AG04449 (cell line): ENCODE measurements at regions of chr17 and their contacts with region 1.

Region 1: GRCh38 chr17:76384222-76384986 is at the start of gene SPHK1:
- DNase-seq: no peak
- H3K4me3 ChIP-seq: peak within 1 kb of the TSS; percentile 76
- CTCF ChIP-seq: no peak

Region 2: GRCh38 chr17:76314392-76315227 is 69.8 kb before region 1 on chr17:
- CTCF ChIA-PET with region 1: interaction called, 851 read pairs
- POLR2A ChIA-PET with region 1: no interaction called
- DNase-seq: no peak
- H3K4me3 ChIP-seq: no peak overlapping the region
- CTCF ChIP-seq: no peak

Region 3: GRCh38 chr17:76327696-76328095 is 56.7 kb before region 1 on chr17:
- CTCF ChIA-PET with region 1: interaction called, 17 read pairs
- POLR2A ChIA-PET with region 1: no interaction called
- DNase-seq: no peak
- H3K4me3 ChIP-seq: no peak overlapping the region
- CTCF ChIP-seq: no peak

Region 4: DNA sequence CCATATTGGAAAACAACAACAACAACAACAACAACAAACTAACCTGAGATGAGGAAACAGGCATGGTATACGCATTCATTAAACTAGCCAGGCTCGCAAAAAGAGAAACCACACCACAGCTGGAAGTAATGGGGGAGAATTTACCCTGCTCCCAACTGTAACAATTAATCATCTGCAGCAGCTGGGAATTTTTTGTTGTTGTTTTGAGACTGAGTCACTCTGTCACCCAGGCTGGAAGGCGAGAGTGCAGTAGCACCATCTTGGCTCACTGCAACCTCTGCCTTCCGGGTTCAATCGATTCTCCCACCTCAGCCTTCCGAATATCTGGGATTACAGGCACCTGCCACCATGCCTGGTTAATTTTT is 47.0 kb before region 1 on chr17:
- CTCF ChIA-PET with region 1: interaction called, 20 read pairs
- POLR2A ChIA-PET with region 1: no interaction called
- DNase-seq: no peak
- H3K4me3 ChIP-seq: no peak overlapping the region
- CTCF ChIP-seq: no peak

Region 5: DNA sequence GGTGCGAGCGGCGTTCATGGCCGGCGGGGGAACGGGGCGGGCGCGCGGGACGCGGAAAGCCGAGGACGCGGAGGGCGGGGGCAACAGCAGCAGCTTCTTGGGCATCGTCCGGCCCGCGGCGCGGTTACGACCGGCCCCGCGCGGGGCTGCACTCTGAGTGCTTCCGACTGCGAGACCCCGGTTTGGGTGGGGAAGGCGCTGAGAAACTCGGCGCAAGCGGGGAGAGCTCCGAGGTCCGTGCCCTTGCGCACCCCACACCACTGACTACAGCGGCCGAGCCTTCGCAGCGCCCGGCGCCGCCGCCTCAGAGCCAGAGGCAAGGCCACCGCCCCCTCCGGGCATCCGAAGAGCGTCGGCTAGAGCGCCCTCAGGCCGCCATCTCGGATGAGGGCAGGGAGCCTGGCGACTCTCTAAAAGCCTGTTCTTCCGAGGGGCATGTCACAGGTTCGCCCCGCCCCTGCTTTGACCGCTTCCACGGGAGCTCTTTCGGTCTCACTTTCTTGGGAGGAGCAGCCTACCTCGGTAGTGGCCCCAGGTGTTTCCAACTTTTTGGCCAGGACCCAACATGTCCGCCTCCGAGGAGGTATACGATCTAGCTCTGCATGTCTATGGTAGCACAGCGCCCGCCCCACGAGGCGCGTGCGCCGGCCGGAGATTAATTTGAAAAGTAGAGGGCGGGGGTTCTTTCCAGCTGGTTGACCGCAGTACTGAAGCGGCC is 30.6 kb before region 1 on chr17 and contains the start of gene PRPSAP1:
- CTCF ChIA-PET with region 1: interaction called, 74 read pairs
- POLR2A ChIA-PET with region 1: interaction called, 47 read pairs
- DNase-seq: no peak
- H3K4me3 ChIP-seq: peak within 1 kb of the TSS; percentile 90
- CTCF ChIP-seq: peak; percentile 64

Region 6: GRCh38 chr17:76370261-76370993 is 14.0 kb before region 1 on chr17:
- CTCF ChIA-PET with region 1: interaction called, 186 read pairs
- POLR2A ChIA-PET with region 1: interaction called, 37 read pairs
- DNase-seq: peak; percentile 67
- H3K4me3 ChIP-seq: no peak overlapping the region
- CTCF ChIP-seq: peak; percentile 68

Region 7: DNA sequence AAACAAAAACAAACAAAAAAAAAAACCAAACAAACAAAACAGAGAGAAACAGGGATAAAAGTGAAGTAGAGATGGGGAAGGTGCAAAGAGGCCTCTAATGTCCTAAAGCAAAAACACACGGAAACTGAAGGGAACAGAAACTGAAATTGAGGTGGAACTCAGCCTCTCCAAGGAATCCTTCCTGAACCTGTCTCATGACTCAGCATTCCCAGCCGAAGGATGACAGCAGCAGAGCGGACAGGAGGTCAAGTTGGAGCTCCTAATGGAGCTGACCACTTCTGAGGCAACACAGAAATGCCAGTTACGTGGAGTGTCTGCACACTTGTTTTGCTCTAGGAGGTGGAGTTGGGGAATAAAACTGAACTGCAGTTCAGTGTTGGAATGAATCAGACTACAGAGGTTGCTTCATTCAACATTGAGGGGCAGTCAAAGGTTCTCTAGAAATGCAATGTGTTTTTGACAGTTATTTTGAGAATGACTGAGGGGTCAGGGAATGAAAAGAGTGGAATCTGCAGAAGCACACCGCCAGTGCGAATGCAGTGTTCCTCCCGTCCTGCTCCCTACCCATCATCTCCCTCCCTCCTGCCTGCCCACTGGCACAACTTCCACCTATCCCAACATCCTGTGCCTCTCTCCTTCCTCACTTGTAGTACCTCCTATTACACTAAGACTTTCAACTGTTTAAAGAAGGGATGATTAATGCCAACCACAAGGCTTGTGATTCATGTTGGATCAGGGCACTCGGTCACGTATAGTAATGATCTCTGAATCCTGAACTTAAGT is 62.2 kb after region 1 on chr17:
- CTCF ChIA-PET with region 1: interaction called, 12 read pairs
- POLR2A ChIA-PET with region 1: no interaction called
- DNase-seq: no peak
- H3K4me3 ChIP-seq: peak overlapping the region; percentile 10
- CTCF ChIP-seq: no peak